ENCODE measurements at regions of chr3 and their contacts with region 1.

Region 1: GRCh38 chr3:53195602-53196574 is 34.9 kb downstream of the PRKCD start:
- DNase-seq: peak; percentile 46 to 54
- ATAC-seq: peak; percentile 44 to 71; a peak in 5 of 6 replicates
- H3K4me3 ChIP-seq: no peak overlapping the region
- H3K27ac ChIP-seq: peak overlapping the region; percentile 61 to 80; a peak in 5 of 6 replicates
- H3K4me1 ChIP-seq: peaks cover 15% of the 10 kb centered on the region
- CTCF ChIP-seq: peak; percentile 90
- EP300 ChIP-seq: no peak
- POLR2A ChIP-seq: no peak
- RAD21 ChIP-seq: peak; percentile 79 to 81

Region 2: DNA sequence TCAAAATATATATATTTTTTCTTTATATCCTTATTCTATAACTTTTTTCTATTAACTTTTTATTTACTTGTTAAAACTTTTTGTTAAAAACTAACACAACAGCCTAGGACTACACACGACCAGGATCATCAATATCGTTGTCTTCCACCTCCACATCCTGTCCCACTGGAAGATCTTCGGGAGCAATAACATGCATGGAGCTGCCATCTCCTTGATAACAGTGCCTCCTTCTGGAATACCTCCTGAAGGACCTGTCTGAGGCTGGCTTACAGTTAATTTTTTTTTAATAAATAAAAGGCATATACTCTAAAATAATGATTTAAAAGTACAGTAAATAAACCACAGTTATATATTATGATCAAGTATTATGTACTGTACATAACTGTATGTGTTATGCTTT is 208.9 kb before region 1 on chr3:
- CTCF ChIA-PET with region 1: no interaction called
- POLR2A ChIA-PET with region 1: no interaction called
- DNase-seq: peak in 1 of 2 experiments; percentile 35
- ATAC-seq: no peak
- H3K4me3 ChIP-seq: no peak overlapping the region
- H3K27ac ChIP-seq: no peak overlapping the region
- H3K4me1 ChIP-seq: no peaks in the 10 kb centered on the region
- CTCF ChIP-seq: peak; percentile 15; the same call in 1 of the 3 replicates
- EP300 ChIP-seq: no peak
- POLR2A ChIP-seq: no peak
- RAD21 ChIP-seq: peak; percentile 24 to 49; a peak in 4 of 5 replicates

Region 3: DNA sequence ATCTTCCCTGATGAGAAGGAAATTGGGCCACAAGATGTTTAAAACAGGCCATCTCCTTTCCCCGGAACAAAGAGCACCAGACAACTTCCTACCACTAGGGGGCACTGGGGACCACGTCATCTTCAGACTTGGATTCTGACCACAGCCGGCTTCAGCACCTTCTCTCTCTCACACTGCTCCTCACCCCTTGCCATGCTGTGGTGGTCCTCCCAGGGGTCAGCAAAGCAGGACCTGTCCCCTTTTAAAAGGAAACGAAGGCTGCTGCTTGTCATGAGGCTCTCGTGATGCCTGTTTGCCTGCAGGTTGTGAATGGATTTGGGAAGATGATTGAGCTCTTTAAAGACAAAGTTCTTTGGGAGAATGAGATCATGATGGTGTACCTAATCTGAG is 81.9 kb before region 1 on chr3:
- CTCF ChIA-PET with region 1: interaction called, 106 read pairs
- POLR2A ChIA-PET with region 1: no interaction called
- DNase-seq: peak; percentile 68 to 72
- ATAC-seq: peak; percentile 95 to 96
- H3K4me3 ChIP-seq: no peak overlapping the region
- H3K27ac ChIP-seq: no peak overlapping the region
- H3K4me1 ChIP-seq: peaks cover 5% of the 10 kb centered on the region; the same call in 2 of the 3 replicates
- CTCF ChIP-seq: peak; percentile 74
- EP300 ChIP-seq: no peak
- POLR2A ChIP-seq: no peak
- RAD21 ChIP-seq: peak; percentile 77 to 85

Region 4: GRCh38 chr3:53140847-53141845 is 54.7 kb before region 1 on chr3:
- CTCF ChIA-PET with region 1: interaction called, 87 read pairs
- POLR2A ChIA-PET with region 1: no interaction called
- DNase-seq: peak in 1 of 2 experiments; percentile 18
- ATAC-seq: peak; percentile 32 to 45; a peak in 5 of 6 replicates
- H3K4me3 ChIP-seq: no peak overlapping the region
- H3K27ac ChIP-seq: no peak overlapping the region
- H3K4me1 ChIP-seq: peaks cover 22% of the 10 kb centered on the region
- CTCF ChIP-seq: no peak
- EP300 ChIP-seq: no peak
- POLR2A ChIP-seq: no peak
- RAD21 ChIP-seq: no peak

Region 5: DNA sequence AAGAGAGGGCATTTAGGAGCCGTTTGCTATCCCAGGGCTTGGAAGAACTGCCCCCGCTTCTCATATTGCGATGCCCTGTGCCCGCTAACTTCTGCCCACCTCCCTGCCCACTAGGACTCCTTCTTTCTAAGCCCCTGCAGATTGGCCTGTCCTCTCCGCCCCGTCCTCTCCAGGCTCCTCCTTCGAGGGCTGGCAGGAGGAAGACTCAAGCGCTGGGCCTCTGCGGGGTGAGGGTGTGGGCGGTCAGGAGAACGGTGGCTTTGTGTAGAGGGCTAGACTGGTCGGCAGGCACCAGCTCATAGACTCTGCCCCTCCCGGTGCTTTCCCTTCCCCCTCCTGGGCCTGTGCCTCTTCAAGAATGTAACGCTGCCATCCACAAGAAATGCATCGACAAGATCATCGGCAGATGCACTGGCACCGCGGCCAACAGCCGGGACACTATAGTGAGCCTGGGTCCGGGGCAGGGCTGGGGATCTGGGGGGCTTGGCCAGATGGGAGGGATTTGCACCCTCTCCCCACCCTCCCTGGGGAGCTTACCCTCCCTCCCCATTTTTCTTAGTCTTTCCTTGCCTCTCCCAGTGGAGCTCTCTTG is 13.0 kb before region 1 on chr3:
- CTCF ChIA-PET with region 1: interaction called, 15 read pairs
- POLR2A ChIA-PET with region 1: no interaction called
- DNase-seq: no peak
- ATAC-seq: no peak
- H3K4me3 ChIP-seq: no peak overlapping the region
- H3K27ac ChIP-seq: no peak overlapping the region
- H3K4me1 ChIP-seq: no peaks in the 10 kb centered on the region
- CTCF ChIP-seq: no peak
- EP300 ChIP-seq: no peak
- POLR2A ChIP-seq: no peak
- RAD21 ChIP-seq: no peak

Region 6: GRCh38 chr3:53227993-53228885 is 32.4 kb after region 1 on chr3:
- CTCF ChIA-PET with region 1: no interaction called
- POLR2A ChIA-PET with region 1: no interaction called
- DNase-seq: no peak
- ATAC-seq: no peak
- H3K4me3 ChIP-seq: no peak overlapping the region
- H3K27ac ChIP-seq: peak overlapping the region in 1 of 2 experiments; percentile 100; a peak in 4 of 6 replicates
- H3K4me1 ChIP-seq: peaks cover 98% of the 10 kb centered on the region
- CTCF ChIP-seq: no peak
- EP300 ChIP-seq: no peak
- POLR2A ChIP-seq: no peak
- RAD21 ChIP-seq: no peak